Activated CD4-positive, alpha-beta memory T cell treated with anti-CD3 and anti-CD28 coated beads for 36 hours (primary cell): ENCODE measurements at regions of chr7 and their contacts with region 1.

Region 1: DNA sequence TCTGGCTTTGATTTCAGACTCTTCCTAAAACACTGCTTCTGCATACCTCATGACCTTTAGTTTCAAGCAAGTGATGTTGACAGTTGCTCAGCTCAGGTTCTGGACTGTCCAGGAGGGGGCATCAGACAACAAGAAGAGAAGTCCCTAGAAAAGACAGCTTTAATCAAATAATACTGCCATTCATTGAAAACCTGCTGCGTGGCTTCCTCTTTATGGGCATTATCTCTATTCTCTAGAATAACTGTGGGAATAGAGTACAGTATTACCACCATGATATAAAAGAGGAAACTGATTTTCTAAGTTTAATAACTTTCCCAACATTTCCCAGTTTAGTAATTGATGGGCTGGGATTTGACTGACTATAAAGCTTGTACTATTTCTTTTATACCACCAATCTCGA is 170.4 kb downstream of the SNX13 start:
- DNase-seq: peak; percentile 65
- H3K4me3 Mint-ChIP-seq: no peak overlapping the region
- H3K27ac Mint-ChIP-seq: no peak overlapping the region
- H3K4me1 Mint-ChIP-seq: peaks cover 5% of the 10 kb centered on the region
- H3K27me3 Mint-ChIP-seq: no peaks in the 10 kb centered on the region

Region 2: GRCh38 chr7:17940302-17940883 is 170.5 kb after region 1 on chr7 and contains the start of gene SNX13:
- CTCF ChIA-PET with region 1: interaction called, 6 read pairs
- POLR2A ChIA-PET with region 1: no interaction called
- intact Hi-C with region 1: loop called (anchors 5 kb)
- DNase-seq: peak; percentile 92
- H3K4me3 Mint-ChIP-seq: peak within 1 kb of the TSS; percentile 98
- H3K27ac Mint-ChIP-seq: peak within 1 kb of the TSS; percentile 94
- H3K4me1 Mint-ChIP-seq: peaks cover 40% of the 10 kb centered on the region
- H3K27me3 Mint-ChIP-seq: no peaks in the 10 kb centered on the region
- total RNA-seq, gene SNX13: 18.6 to 19.8 TPM

Region 3: GRCh38 chr7:17991866-17992648 is 222.1 kb after region 1 on chr7:
- CTCF ChIA-PET with region 1: interaction called, 28 read pairs
- POLR2A ChIA-PET with region 1: no interaction called
- intact Hi-C with region 1: loop called (anchors 1 kb)
- DNase-seq: peak; percentile 47
- H3K4me3 Mint-ChIP-seq: no peak overlapping the region
- H3K27ac Mint-ChIP-seq: no peak overlapping the region
- H3K4me1 Mint-ChIP-seq: peaks cover 13% of the 10 kb centered on the region
- H3K27me3 Mint-ChIP-seq: peaks cover 10% of the 10 kb centered on the region

Region 4: GRCh38 chr7:18320971-18321567 is 551.2 kb after region 1 on chr7:
- CTCF ChIA-PET with region 1: interaction called, 58 read pairs
- POLR2A ChIA-PET with region 1: no interaction called
- intact Hi-C with region 1: loop called (anchors 1 kb)
- DNase-seq: no peak
- H3K4me3 Mint-ChIP-seq: no peak overlapping the region
- H3K27ac Mint-ChIP-seq: no peak overlapping the region
- H3K4me1 Mint-ChIP-seq: no peaks in the 10 kb centered on the region
- H3K27me3 Mint-ChIP-seq: peaks cover 4% of the 10 kb centered on the region

Region 5: DNA sequence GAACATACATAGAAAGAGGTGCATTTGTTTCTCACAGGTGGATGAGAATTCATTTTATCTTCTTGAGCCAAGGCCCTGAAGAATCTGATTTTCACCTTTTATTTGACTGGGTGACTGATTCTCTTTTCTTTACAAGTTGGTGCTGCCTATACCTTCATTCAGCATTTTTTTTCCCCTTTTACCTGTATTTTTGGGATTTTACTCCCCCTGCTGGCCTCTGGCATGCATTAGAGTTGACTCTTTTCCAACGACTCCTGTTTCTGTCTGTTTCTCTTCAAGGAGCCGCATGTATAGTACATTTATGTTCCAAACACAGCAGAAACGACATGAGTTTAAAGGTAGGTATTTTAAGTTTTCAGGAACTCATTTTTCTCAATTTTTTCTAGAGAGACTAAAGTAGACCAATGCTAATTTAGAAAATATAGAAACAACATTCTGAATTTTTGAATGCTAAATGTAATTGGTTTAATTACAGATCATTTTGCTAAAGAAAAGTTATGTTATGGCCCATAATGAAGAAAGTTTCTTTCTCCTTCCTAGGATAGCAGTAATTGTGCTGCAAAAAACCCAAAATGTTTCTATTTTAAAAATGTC is 575.8 kb after region 1 on chr7:
- CTCF ChIA-PET with region 1: interaction called, 19 read pairs
- POLR2A ChIA-PET with region 1: no interaction called
- intact Hi-C with region 1: loop called (anchors 1 kb)
- DNase-seq: peak; percentile 20
- H3K4me3 Mint-ChIP-seq: no peak overlapping the region
- H3K27ac Mint-ChIP-seq: no peak overlapping the region
- H3K4me1 Mint-ChIP-seq: no peaks in the 10 kb centered on the region
- H3K27me3 Mint-ChIP-seq: peaks cover 5% of the 10 kb centered on the region

Region 6: DNA sequence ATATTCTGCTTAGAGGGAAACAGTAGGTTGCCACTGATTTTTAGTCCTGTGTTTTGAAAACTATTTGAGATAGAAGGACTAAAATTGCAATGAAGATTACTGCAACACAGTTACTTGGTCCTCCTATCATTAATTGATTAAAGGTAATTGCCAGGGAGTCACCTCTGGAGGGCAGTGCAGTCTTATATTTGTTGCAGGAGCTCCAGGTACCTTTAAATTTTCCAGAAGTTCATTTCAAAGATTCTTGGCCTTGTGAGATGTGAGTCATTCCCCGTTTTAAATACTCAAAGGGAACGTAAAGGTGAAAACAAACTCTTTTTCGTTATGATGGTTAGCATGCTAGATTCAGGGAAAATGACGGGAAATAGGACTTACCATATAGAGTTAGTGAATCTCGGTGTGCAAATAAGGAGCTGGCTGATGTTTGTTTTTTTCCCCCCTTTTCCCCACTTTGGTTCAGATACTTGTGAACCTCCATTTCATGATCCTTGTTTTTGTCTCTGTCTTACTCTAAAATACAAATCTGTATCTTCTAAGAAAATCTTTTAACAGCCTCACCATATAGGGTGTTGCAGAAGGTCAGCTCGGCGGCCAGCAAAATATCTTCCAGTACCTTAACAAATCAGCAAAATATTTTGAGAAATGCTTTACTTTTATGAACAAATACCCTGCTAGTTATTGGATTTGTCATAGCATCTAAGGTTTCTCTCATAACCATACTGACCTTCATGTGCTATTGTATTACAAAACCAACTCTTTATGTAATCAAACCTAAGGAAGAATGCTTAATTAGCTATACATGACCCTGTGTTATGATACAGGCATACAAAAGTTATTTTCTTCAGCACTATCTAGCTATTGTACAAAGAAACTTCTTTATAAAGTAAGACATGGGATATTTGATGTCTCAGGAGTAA is 582.7 kb after region 1 on chr7:
- CTCF ChIA-PET with region 1: interaction called, 13 read pairs
- POLR2A ChIA-PET with region 1: no interaction called
- intact Hi-C with region 1: no loop called
- DNase-seq: peak; percentile 25
- H3K4me3 Mint-ChIP-seq: no peak overlapping the region
- H3K27ac Mint-ChIP-seq: no peak overlapping the region
- H3K4me1 Mint-ChIP-seq: peaks cover 3% of the 10 kb centered on the region
- H3K27me3 Mint-ChIP-seq: peaks cover 3% of the 10 kb centered on the region